ENCODE measurements at regions of chr17 and their contacts with region 1.

Region 1: GRCh38 chr17:1716076-1716995 is 6.2 kb upstream of the TLCD2 start:
- DNase-seq: peak; percentile 100
- CTCF ChIP-seq: no peak

Region 2: DNA sequence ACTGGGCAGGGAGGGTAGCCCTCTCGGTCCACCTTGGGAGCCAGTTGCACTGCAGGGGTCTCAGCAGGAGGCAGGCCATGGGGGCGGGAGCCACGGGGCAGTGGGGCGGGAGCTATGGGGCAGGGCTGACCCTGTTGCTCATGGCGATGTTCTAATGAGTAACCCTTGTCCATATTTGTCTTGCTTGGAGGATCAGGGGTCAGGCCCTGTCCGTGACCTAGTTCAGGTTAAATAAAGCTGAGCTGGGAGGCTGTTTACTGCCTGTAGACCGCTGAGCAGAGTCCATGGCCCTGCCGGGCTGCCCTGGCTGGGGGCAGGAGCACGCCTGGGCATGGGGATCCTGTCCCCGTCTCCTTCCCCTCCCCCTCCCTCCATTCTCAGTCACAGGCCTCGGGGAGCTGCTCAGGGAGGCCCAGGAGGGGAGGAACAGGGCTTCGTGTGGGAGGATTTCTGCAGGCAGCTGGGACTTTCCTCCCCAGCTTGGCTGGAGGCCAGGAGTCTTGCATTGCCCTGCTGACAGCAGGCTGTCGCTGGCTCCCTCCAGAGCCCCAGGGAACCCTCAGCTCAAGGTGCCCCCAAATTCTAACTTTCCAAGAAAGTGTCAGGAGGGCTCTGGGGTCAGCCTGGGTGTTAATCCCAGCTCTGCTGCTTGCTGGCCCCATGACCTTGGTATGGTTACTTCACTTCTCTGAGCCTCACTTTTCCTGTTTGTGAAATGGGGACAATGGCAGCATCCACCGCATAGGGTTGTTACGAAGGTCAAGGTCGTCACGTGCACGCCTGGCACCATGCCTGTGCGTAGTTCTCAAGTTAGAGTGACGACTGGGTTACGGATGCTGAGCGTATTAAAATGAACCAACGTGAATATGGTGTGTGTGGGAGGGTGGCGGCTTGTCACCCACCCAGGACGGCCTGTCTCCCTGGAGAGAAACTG is 20.3 kb after region 1 on chr17:
- CTCF ChIA-PET with region 1: interaction called, 26 read pairs
- POLR2A ChIA-PET with region 1: interaction called, 11 read pairs
- DNase-seq: peak; percentile 90
- CTCF ChIP-seq: no peak

Measured in GM10248 (cell line).